IMR-90 (cell line): ENCODE measurements at regions of chr16 and their contacts with region 1.

Region 1: GRCh38 chr16:65117811-65118448 is 3.9 kb downstream of the CDH11 start:
- DNase-seq: peak; percentile 90
- ATAC-seq: peak; percentile 7
- H3K4me3 ChIP-seq: 0 out of 2 replicates have a peak overlapping the region, but pooled peaks have one; percentile 8
- H3K27ac ChIP-seq: peak overlapping the region; percentile 69
- H3K4me1 ChIP-seq: peaks cover 4% of the 10 kb centered on the region
- H3K27me3 ChIP-seq: no peaks in the 10 kb centered on the region
- CTCF ChIP-seq: peak; percentile 95
- POLR2A ChIP-seq: peak; percentile 48
- RAD21 ChIP-seq: peak; percentile 93

Region 2: GRCh38 chr16:64440421-64440831 is 677.5 kb before region 1 on chr16:
- CTCF ChIA-PET with region 1: no interaction called
- POLR2A ChIA-PET with region 1: no interaction called
- dilution Hi-C with region 1: no loop called
- in situ Hi-C with region 1: loop called (anchors 25 kb)
- intact Hi-C with region 1: no loop called
- DNase-seq: peak; percentile 99
- ATAC-seq: peak; percentile 97
- H3K4me3 ChIP-seq: no peak overlapping the region
- H3K27ac ChIP-seq: no peak overlapping the region
- H3K4me1 ChIP-seq: peaks cover 2% of the 10 kb centered on the region
- H3K27me3 ChIP-seq: no peaks in the 10 kb centered on the region
- CTCF ChIP-seq: no peak
- POLR2A ChIP-seq: no peak
- RAD21 ChIP-seq: peak; percentile 29; the same call in 1 of the 2 replicates

Region 3: DNA sequence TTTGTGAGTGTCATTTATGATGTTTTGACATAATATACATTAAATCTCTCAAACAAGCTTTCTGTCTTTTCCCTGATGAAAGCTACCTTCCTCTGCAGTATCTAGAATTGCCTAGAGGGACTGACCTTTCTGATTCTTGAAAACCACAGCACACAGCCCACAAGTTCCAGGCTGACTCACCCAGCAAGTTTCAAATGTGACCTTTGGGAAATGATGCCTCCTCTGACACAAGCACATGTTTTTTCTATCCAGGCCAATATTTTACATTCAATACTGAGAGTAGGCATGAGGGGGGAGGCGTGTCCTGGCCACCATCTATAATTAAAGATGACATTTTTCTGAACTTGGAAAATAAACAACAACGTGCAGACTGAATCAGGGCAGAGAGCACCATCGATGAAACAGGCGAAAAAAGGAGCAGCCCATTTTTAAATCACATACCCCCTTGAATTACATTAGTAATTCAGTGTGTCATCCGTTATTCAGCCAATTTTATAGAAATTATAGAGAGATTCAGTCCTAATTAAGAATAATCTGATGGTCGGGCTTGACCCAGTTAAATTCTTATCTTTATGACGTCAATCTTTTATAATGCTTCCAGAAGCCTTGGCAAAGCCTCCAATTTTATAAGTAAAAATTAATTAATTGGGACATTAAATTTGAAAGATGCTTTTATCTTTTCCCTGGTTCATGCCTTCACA is 296.5 kb after region 1 on chr16:
- CTCF ChIA-PET with region 1: no interaction called
- POLR2A ChIA-PET with region 1: no interaction called
- dilution Hi-C with region 1: no loop called
- in situ Hi-C with region 1: no loop called
- intact Hi-C with region 1: loop called (anchors 5 kb)
- DNase-seq: peak; percentile 87
- ATAC-seq: peak; percentile 81
- H3K4me3 ChIP-seq: no peak overlapping the region
- H3K27ac ChIP-seq: no peak overlapping the region
- H3K4me1 ChIP-seq: no peaks in the 10 kb centered on the region
- H3K27me3 ChIP-seq: no peaks in the 10 kb centered on the region
- CTCF ChIP-seq: no peak
- POLR2A ChIP-seq: no peak
- RAD21 ChIP-seq: no peak; the same call in 1 of the 2 replicates

Region 4: DNA sequence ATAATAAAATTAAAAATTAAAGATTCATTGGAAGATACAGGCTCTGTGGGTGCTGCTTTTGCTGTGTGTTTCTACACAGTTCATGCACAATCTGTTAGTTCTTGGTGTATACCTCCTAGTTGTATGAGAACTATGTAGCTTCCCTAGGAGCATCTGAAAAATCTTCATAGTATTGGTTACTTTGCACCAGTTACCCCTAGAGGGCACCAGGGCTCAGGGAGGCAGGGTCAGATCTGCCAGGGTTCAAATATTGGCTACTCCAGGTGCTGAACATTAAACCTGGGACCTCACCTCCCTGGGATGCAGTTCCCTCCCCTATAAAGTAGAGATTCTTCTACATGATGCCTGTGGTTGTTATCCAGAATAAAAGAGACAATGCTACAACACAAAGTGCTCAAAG is 586.9 kb after region 1 on chr16:
- CTCF ChIA-PET with region 1: no interaction called
- POLR2A ChIA-PET with region 1: no interaction called
- dilution Hi-C with region 1: no loop called
- in situ Hi-C with region 1: no loop called
- intact Hi-C with region 1: loop called (anchors 5 kb)
- DNase-seq: no peak
- ATAC-seq: no peak
- H3K4me3 ChIP-seq: no peak overlapping the region
- H3K27ac ChIP-seq: no peak overlapping the region
- H3K4me1 ChIP-seq: peaks cover 7% of the 10 kb centered on the region; the same call in 1 of the 2 replicates
- H3K27me3 ChIP-seq: peaks cover 5% of the 10 kb centered on the region; the same call in 1 of the 2 replicates
- CTCF ChIP-seq: no peak; the same call in 1 of the 2 replicates
- POLR2A ChIP-seq: no peak
- RAD21 ChIP-seq: peak; percentile 38; the same call in 1 of the 2 replicates

Region 5: DNA sequence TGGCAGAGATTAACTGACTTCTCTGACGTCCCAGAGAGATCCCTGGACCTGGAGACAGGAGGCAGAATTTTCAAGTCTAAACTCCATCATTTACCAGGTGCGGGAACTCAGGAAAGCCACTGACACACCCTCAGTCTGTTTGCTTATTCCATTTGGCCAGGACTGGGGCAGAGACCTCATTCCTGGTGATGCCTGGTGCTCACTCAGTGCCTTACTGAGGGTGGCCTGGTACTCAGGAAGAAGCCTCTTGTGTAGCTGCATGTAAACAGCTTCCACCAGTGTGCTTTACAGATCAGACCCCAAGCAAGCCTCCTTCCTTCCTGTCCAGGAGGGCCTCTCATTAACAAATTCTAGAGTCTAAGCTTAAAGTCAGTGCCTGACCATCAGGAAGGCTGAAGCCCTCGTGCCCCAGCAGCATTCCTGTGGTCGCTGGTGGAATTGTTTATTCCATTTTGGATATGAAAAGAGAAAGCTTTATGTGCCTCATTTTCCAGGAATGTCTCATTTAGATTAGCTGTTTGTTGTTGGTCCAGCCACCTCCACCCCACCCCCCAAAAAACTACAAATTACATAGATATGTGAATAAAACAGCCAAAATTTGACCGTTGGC is 1012.5 kb after region 1 on chr16:
- CTCF ChIA-PET with region 1: no interaction called
- POLR2A ChIA-PET with region 1: no interaction called
- dilution Hi-C with region 1: no loop called
- in situ Hi-C with region 1: no loop called
- intact Hi-C with region 1: loop called (anchors 2 kb)
- DNase-seq: peak; percentile 92
- ATAC-seq: peak; percentile 87
- H3K4me3 ChIP-seq: no peak overlapping the region
- H3K27ac ChIP-seq: peak overlapping the region; percentile 99
- H3K4me1 ChIP-seq: peaks cover 57% of the 10 kb centered on the region
- H3K27me3 ChIP-seq: no peaks in the 10 kb centered on the region
- CTCF ChIP-seq: no peak
- POLR2A ChIP-seq: no peak
- RAD21 ChIP-seq: no peak; the same call in 1 of the 2 replicates

Region 6: DNA sequence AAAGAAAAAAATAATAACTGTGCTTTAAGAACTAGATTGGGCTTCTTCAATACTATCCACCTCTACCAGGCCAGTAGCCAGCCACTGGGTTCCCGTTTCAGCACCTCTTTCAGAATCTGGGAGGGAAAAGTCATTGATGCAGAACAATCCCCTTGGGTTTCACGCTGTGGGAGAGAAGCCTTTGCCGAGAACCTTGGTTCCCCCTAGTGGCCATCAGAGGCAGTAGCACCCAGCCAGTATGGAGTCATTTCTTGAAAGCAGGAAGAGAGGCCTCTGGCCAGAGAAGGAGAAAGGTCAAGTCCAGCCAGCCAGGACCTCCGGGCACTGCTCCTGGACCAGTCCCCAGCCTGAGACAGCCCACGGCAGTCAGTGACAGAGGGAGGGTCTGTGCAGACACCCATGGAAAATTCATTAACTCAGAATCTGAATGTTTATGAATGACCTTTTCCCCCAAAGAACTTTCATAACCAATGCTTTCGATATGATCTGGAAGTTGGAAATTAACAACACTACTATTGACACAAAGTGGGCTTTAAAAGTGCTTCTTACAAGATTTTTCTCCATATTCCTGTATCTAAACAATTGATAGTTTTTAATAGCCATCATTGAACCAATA is 1197.4 kb after region 1 on chr16:
- CTCF ChIA-PET with region 1: no interaction called
- POLR2A ChIA-PET with region 1: no interaction called
- dilution Hi-C with region 1: no loop called
- in situ Hi-C with region 1: no loop called
- intact Hi-C with region 1: loop called (anchors 1 kb)
- DNase-seq: peak; percentile 70
- ATAC-seq: peak; percentile 100
- H3K4me3 ChIP-seq: no peak overlapping the region
- H3K27ac ChIP-seq: no peak overlapping the region
- H3K4me1 ChIP-seq: no peaks in the 10 kb centered on the region; the same call in 1 of the 2 replicates
- H3K27me3 ChIP-seq: peaks cover 26% of the 10 kb centered on the region
- CTCF ChIP-seq: peak; percentile 93
- POLR2A ChIP-seq: no peak
- RAD21 ChIP-seq: peak; percentile 92